ENCODE measurements at regions of chr22 and their contacts with region 1.

Region 1: GRCh38 chr22:25777870-25778269 is 35.9 kb downstream of the MYO18B start:
- DNase-seq: no peak
- ATAC-seq: no peak
- H3K4me3 ChIP-seq: no peak overlapping the region
- H3K27ac ChIP-seq: no peak overlapping the region
- H3K4me1 ChIP-seq: peaks cover 0 to 8% (median 0%) of the 10 kb centered on the region in 12 donors
- H3K27me3 ChIP-seq: no peaks in the 10 kb centered on the region
- CTCF ChIP-seq: peak in 6 of 12 donors; percentile 19 to 39 (median 23)
- POLR2A ChIP-seq: no peak

Region 2: DNA sequence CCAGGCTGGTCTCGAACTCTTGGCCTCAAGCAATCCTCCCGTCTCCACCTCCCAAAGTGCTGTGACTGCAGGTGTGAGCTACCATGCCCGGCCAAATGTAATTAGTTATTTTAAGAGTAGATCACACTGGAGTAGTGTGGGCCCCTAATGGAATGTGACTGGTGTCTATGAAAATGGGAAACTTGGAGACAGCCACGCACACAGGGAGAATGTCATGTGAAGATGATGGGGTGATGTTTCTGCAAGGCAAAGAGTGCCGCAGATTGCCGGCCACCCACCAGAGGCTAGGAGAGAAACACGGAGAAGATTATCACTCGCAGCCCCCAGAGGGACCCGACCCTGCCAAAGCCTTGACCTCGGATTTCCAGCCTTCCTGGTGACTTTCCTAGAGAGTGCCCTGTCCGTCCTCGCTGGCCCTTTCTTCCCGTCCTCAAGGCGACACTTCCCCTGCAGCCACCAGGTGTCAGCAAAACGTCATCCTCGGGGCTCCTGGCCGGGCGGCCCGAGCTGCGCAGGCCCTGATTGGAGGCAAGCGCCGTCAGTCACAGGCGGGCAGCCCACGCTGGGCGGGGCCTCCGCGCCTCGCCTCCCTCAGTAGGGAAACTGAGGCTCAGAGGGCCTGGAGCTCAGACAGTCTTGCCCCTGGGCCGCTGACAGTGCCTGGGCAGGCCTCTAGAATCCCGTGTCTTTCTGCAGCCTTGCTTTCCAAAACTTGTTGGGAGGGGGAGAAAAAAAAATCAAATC is 542.2 kb before region 1 on chr22:
- intact Hi-C with region 1: loop called in 2 of 10 experiments (anchors 5 to 10 kb)
- DNase-seq: peak; percentile 72 to 86 (median 85)
- ATAC-seq: peak; percentile 58 to 95 (median 94)
- H3K4me3 ChIP-seq: peak overlapping the region in 1 of 12 donors; percentile 5
- H3K27ac ChIP-seq: no peak overlapping the region
- H3K4me1 ChIP-seq: peaks cover 0 to 5% (median 0%) of the 10 kb centered on the region in 12 donors
- H3K27me3 ChIP-seq: peaks cover 0 to 30% (median 11%) of the 10 kb centered on the region in 9 donors
- CTCF ChIP-seq: peak; percentile 40 to 76 (median 59)
- POLR2A ChIP-seq: no peak

Region 3: DNA sequence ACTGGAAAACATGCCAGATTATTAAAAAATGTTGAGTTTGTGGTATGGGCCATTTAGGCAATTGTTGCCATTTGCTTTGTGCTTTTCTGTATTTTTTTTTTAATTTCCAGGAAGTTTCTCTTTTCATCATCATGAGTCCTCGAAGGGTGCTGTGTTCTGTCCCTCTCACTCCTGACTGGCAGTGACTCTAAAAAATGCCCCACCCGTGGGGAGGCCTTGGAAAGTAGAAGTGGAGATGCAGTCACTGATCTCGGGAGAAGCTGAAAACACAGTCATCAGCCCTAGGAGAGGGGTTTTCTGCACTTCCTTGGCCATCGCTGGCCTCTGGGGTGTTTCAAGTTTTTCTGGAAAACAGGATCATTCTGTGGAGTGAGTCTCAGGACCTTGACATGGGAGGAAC is 311.9 kb before region 1 on chr22:
- intact Hi-C with region 1: loop called in 8 of 10 experiments (anchors 1 to 5 kb)
- DNase-seq: no peak
- ATAC-seq: no peak
- H3K4me3 ChIP-seq: no peak overlapping the region
- H3K27ac ChIP-seq: no peak overlapping the region
- H3K4me1 ChIP-seq: peaks cover 0 to 5% (median 0%) of the 10 kb centered on the region in 12 donors
- H3K27me3 ChIP-seq: no peaks in the 10 kb centered on the region
- CTCF ChIP-seq: no peak
- POLR2A ChIP-seq: no peak

Region 4: DNA sequence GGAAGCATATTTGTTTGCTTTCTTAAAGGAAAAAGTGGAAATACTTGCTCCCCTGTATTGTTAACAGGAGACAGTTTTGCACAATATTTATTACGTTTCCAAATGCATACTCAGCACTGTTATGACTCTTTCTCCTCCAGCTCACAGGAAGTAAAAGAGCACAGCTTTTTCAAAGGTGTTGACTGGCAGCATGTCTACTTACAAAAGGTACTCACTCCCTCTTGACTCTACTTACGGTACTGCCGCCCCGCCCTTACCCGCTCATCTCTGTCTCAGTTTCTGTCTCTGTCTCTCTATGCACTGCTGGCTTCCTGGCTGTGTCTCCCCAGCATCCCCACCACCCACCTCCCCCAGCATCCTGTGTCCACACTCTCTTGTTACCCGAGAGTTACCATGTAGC is 68.1 kb before region 1 on chr22:
- intact Hi-C with region 1: loop called in 5 of 10 experiments (anchors 5 to 10 kb)
- DNase-seq: no peak
- ATAC-seq: no peak
- H3K4me3 ChIP-seq: no peak overlapping the region
- H3K27ac ChIP-seq: no peak overlapping the region
- H3K4me1 ChIP-seq: peaks cover 0 to 10% (median 0%) of the 10 kb centered on the region in 12 donors
- H3K27me3 ChIP-seq: no peaks in the 10 kb centered on the region
- CTCF ChIP-seq: no peak
- POLR2A ChIP-seq: no peak

Region 5: DNA sequence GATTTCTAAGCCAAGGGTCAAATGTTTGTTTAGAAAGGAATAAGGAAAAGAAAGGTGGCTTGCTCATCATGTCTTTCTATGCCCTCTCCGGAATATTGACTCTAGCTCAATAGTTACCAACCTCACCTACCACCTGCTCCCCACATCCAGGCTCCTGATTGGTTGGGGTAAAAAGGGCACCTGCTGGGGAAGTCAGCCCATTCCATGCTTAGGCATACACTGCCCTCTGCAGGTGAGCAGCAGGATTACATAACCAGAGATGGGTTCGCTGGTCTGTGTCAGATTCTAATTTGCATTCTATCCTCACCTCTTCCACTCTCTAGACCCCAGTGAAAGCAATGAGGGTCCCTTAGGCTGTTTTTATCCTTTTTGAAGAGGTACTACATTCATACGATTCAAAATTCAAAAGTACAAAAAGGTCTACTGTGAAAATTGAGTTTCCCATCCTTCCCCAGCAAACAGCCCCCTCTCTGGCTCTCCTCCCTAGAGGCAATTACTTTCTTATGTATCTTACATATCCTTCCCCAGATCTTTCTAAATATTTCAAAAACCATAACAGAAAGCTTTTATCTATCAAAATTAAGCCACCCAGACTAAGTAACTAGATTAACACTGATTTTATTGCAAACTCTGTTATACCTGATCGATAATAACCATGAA is 553.2 kb after region 1 on chr22:
- intact Hi-C with region 1: loop called in 1 of 10 experiments (anchors 10 kb)
- DNase-seq: peak in 3 of 5 donors; percentile 12 to 40 (median 36)
- ATAC-seq: peak in 3 of 4 donors; percentile 62 to 72 (median 68)
- H3K4me3 ChIP-seq: no peak overlapping the region
- H3K27ac ChIP-seq: no peak overlapping the region
- H3K4me1 ChIP-seq: no peaks in the 10 kb centered on the region
- H3K27me3 ChIP-seq: peaks cover 0 to 18% (median 4%) of the 10 kb centered on the region in 9 donors
- CTCF ChIP-seq: peak; percentile 54 to 82 (median 76)
- POLR2A ChIP-seq: no peak

Measured in heart left ventricle (tissue), 16 donors.